ENCODE measurements at regions of chr10 and their contacts with region 1.

Region 1: DNA sequence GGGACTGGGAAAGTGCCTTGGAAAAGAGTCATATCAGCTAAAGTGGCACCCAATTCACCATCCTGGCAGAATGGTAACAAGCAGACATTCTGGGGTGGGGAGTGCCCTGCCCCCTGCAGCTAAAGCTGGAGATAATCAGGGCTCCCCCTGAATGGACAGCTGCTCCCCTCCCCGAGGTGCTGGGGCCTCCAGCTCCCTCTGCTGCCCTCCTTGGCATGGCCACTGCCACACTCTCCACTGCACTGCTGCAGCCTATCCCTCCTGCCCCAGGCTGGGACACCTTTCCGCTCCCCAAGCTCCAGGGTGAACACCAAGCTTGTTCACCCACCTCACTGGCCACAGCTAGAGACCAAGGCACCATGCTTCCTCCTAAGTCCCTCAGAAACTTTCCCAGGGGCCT is 9.8 kb upstream of the PARD3 start:
- DNase-seq: no peak
- ATAC-seq: peak; percentile 55 to 67 (median 61)
- H3K4me3 ChIP-seq: no peak overlapping the region
- H3K27ac ChIP-seq: no peak overlapping the region
- H3K4me1 ChIP-seq: no peaks in the 10 kb centered on the region
- H3K27me3 ChIP-seq: no peaks in the 10 kb centered on the region
- CTCF ChIP-seq: peak in 7 of 12 donors; percentile 7 to 35 (median 17)
- POLR2A ChIP-seq: no peak

Region 2: DNA sequence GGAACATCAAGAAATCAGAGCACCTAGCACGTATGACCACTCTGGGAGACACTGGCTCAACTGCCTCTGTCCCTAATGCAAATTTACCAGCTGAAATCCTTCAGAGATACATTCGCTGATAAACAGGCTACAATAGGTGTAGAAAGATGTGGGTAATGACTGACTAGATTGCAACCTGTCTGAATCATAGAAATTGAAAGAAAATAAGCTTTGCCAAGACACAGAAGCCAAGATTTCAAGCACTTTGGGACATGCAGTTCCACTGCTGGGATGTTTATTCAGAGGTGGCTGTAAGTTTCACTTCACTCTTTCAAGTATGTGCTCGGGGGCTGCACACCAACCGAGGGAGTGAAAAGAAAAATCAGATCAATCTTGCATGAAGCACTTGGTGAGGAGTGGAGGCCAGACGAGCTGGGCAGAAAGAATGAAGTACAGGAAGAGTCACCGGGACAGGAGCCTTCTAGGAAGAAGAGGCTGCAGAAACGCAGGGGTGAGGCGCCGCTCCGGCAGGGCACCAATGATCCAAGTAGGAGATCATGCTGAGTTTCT is 286.5 kb before region 1 on chr10:
- intact Hi-C with region 1: no loop called
- DNase-seq: no peak
- ATAC-seq: peak in 2 of 4 donors; percentile 14 to 16
- H3K4me3 ChIP-seq: peak overlapping the region in 5 of 12 donors; percentile 2 to 51 (median 20)
- H3K27ac ChIP-seq: peak overlapping the region in 1 of 12 donors; percentile 40
- H3K4me1 ChIP-seq: peaks cover 0 to 36% (median 11%) of the 10 kb centered on the region in 12 donors
- H3K27me3 ChIP-seq: no peaks in the 10 kb centered on the region
- CTCF ChIP-seq: no peak
- POLR2A ChIP-seq: no peak

Region 3: DNA sequence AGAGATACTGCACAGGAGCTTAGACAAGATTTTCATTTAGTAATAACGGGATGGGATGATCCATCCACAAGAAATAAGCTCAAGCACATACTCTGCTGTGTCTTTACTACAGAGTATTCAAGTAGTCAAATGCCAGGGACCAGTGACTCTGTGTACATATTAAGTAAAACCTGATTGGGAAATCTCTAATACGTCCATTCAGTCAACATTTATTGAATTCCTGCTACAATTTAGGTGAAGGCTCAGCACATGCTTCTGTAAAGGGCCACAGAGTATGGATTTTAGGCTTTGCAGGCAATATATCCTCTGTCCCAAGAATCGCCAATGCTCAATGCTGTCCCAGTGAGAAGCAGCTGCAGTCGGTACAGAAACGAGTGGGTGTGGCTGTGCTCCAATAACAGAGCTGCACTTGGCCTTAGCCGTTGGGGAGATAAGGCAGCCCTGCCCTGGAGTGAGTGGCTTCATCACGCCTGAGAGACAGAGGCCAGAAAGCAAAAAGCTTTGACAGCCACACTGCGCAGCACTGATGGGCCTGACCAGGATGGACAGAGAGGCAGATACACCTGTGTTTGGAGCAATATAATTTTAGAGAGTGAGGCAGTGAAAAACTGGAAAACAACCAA is 196.6 kb before region 1 on chr10:
- intact Hi-C with region 1: no loop called
- DNase-seq: peak; percentile 76 to 89 (median 81)
- ATAC-seq: peak; percentile 90 to 98 (median 96)
- H3K4me3 ChIP-seq: no peak overlapping the region
- H3K27ac ChIP-seq: peak overlapping the region in 1 of 12 donors; percentile 26
- H3K4me1 ChIP-seq: peaks cover 0 to 34% (median 12%) of the 10 kb centered on the region in 12 donors
- H3K27me3 ChIP-seq: no peaks in the 10 kb centered on the region
- CTCF ChIP-seq: no peak
- POLR2A ChIP-seq: no peak

Region 4: GRCh38 chr10:34666008-34666705 is 158.7 kb before region 1 on chr10:
- intact Hi-C with region 1: loop called in 2 of 10 experiments (anchors 5 to 10 kb)
- DNase-seq: peak in 1 of 5 donors; percentile 36
- ATAC-seq: peak in 3 of 4 donors; percentile 80 to 85 (median 84)
- H3K4me3 ChIP-seq: no peak overlapping the region
- H3K27ac ChIP-seq: no peak overlapping the region
- H3K4me1 ChIP-seq: peaks cover 0 to 23% (median 2%) of the 10 kb centered on the region in 12 donors
- H3K27me3 ChIP-seq: no peaks in the 10 kb centered on the region
- CTCF ChIP-seq: peak; percentile 28 to 67 (median 54)
- POLR2A ChIP-seq: no peak

Region 5: GRCh38 chr10:34677591-34677990 is 147.3 kb before region 1 on chr10:
- intact Hi-C with region 1: loop called in 1 of 10 experiments (anchors 10 kb)
- DNase-seq: no peak
- ATAC-seq: no peak
- H3K4me3 ChIP-seq: no peak overlapping the region
- H3K27ac ChIP-seq: no peak overlapping the region
- H3K4me1 ChIP-seq: peaks cover 0 to 23% (median 8%) of the 10 kb centered on the region in 12 donors
- H3K27me3 ChIP-seq: no peaks in the 10 kb centered on the region
- CTCF ChIP-seq: peak in 1 of 12 donors; percentile 6
- POLR2A ChIP-seq: no peak

Region 6: DNA sequence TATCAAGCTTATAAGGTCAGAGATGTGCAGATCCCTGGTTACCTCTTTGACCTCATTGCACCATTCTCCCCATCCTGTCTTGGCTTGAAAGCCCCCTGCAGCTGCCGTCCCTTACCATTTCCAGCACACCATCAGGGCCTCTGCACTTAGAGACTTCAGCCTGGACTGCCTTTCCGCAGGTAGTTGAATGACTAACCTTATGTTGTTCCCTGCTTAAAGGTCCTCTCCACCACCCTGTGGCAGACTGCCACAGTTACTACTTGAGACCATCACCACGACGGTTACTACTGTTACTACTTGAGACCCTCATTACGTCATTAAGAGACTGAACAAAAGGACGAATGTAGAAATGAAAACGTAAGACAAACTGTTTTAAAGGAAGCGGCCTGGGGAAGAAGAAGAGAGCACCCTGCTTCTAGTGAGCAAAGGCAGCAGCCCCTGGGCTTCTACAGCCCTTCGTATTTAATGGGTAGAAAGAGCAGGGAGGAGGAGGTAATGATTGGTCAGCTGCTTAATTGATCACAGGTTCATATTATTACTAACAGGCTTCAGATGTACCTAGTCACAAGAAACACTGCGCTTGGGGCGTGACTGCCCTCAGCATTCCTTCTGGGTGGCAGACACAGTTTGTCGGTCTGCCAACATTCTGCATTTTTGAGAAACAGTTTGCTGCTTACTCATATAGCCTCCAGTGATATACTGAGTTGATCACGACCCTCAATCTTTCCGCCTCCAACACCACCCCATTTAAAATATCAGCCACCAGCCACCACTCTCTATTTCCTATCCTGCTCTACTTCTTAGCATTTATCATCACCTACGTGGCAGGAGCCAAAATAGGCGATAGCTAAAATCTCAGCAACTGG is 64.4 kb after region 1 on chr10:
- intact Hi-C with region 1: loop called in 1 of 10 experiments (anchors 5 kb)
- DNase-seq: no peak
- ATAC-seq: no peak
- H3K4me3 ChIP-seq: no peak overlapping the region
- H3K27ac ChIP-seq: no peak overlapping the region
- H3K4me1 ChIP-seq: no peaks in the 10 kb centered on the region
- H3K27me3 ChIP-seq: no peaks in the 10 kb centered on the region
- CTCF ChIP-seq: no peak
- POLR2A ChIP-seq: no peak

Region 7: DNA sequence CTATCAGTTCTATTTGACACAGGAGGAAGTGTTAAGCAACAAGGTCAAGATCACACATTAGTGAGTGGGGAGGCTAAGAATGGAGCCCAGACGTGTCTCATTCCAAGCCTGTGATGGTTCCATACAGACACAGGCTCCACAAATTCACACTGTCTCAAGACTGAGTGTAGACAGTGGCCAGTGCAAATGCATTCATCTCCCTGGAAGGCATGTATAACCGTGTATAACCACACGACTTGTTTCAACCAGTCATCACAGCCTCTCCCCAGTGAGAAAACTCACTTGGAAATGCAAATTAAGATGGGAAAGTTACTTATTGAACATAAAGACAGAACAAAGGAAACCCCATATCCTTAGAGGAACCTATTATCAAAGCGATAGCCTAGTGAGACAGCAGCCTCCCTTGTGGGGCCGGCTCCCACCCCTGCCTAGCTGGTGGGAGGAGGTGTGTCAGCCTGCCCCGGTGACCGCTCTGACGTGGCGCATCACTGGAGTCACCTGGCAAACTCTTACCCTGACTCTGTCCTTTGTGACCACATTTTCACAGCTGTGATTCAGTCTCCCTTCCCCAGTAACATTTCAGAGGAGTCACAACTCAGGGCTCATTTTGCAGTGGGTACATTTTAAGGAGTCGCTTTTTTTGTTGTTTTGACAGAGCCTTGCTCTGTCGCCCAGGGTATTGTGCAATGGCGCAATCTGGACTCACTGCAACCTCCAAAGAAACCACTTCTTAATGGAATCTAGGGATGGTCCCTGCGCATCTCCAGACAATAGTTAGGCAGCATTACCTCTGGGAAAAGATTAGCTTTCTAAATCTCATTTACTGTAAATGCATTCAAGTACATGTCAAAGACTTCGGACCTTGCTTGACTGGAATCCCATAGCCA is 116.8 kb after region 1 on chr10:
- intact Hi-C with region 1: loop called in 1 of 10 experiments (anchors 10 kb)
- DNase-seq: no peak
- ATAC-seq: no peak
- H3K4me3 ChIP-seq: no peak overlapping the region
- H3K27ac ChIP-seq: no peak overlapping the region
- H3K4me1 ChIP-seq: no peaks in the 10 kb centered on the region
- H3K27me3 ChIP-seq: no peaks in the 10 kb centered on the region
- CTCF ChIP-seq: no peak
- POLR2A ChIP-seq: no peak

Region 8: GRCh38 chr10:34954168-34954567 is 129.3 kb after region 1 on chr10:
- intact Hi-C with region 1: loop called in 3 of 10 experiments (anchors 10 kb)
- DNase-seq: no peak
- ATAC-seq: no peak
- H3K4me3 ChIP-seq: no peak overlapping the region
- H3K27ac ChIP-seq: no peak overlapping the region
- H3K4me1 ChIP-seq: peaks cover 0 to 6% (median 0%) of the 10 kb centered on the region in 12 donors
- H3K27me3 ChIP-seq: no peaks in the 10 kb centered on the region
- CTCF ChIP-seq: no peak
- POLR2A ChIP-seq: no peak